ENCODE measurements at regions of chr3 and their contacts with region 1.

Region 1: DNA sequence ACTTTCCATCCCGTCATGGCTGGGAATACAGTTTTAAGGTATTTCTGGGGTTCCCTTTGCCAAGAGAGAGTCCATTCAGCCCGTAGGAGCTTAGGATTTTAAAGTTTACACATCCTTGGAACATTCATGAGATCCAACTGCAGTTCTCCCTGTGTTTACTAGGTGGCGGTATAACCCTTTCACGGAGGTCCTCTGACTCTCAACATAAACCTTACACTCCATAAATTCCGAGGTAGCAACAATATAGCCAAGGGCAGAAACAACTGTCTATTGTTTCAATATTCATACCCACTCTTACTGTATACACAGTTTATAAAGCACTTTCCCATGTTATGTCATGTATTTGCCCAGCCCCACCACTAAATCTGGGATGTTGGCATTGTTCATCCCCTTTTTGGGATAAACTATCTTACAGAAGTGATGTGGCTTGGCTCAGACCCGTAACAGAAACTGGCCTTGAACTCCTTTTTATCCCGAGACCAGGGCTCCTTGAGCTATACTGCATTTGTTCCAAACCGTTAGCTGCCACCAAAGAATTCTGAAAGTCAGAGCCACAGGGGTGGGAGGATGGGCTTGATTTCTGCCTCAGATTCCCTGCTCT is 69.2 kb upstream of the COL6A5 start:
- DNase-seq: peak; percentile 44
- H3K4me3 ChIP-seq: no peak overlapping the region
- H3K27ac ChIP-seq: no peak overlapping the region
- H3K4me1 ChIP-seq: no peaks in the 10 kb centered on the region
- H3K27me3 ChIP-seq: peaks cover 3% of the 10 kb centered on the region
- CTCF ChIP-seq: peak; percentile 94 to 97

Region 2: DNA sequence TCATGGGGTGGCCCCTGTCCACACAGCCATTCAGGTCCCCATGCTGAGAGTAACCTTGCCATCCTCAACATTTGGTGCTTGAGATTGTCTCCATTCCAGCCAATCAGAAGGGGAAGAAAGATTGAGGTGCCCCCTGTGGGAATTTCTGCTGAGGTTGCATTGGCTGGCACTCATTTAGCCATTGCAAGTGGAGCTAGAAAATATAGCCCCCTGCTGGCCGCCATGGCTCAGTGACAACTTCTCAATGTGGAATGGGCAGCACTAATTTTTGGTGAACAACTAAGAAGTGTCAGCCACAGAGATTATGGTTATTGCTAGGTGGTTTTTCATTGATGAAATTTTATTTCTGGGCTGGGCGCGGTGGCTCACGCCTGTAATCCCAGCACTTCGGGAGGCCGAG is 262.7 kb after region 1 on chr3:
- CTCF ChIA-PET with region 1: interaction called, 4 read pairs
- dilution Hi-C with region 1: no loop called
- in situ Hi-C with region 1: loop called (anchors 5 kb)
- intact Hi-C with region 1: loop called (anchors 1 kb)
- DNase-seq: peak; percentile 19
- H3K4me3 ChIP-seq: no peak overlapping the region
- H3K27ac ChIP-seq: no peak overlapping the region
- H3K4me1 ChIP-seq: no peaks in the 10 kb centered on the region
- H3K27me3 ChIP-seq: no peaks in the 10 kb centered on the region
- CTCF ChIP-seq: peak; percentile 78

Region 3: DNA sequence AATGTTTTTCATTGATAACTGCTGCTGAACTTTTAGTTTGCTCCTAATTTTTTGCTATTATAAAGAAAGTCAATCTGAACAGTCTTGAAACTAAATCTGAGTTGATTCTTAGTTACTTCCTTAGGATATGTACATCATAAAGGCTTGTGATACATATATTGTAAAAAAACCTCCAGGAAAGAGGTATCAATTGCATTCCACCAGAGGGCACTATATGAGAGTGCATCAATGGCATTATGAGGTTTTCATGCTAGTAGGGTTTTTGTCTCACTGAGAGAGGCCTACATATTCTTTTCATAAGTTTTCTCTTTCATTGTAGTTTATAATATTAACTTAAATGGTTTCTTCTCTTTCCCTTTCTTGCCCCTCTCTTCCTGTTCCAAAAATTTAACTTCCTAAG is 423.5 kb after region 1 on chr3:
- CTCF ChIA-PET with region 1: no interaction called
- dilution Hi-C with region 1: no loop called
- in situ Hi-C with region 1: no loop called
- intact Hi-C with region 1: loop called (anchors 10 kb)
- DNase-seq: peak; percentile 31
- H3K4me3 ChIP-seq: no peak overlapping the region
- H3K27ac ChIP-seq: no peak overlapping the region
- H3K4me1 ChIP-seq: no peaks in the 10 kb centered on the region
- H3K27me3 ChIP-seq: no peaks in the 10 kb centered on the region
- CTCF ChIP-seq: peak; percentile 64 to 67

Region 4: DNA sequence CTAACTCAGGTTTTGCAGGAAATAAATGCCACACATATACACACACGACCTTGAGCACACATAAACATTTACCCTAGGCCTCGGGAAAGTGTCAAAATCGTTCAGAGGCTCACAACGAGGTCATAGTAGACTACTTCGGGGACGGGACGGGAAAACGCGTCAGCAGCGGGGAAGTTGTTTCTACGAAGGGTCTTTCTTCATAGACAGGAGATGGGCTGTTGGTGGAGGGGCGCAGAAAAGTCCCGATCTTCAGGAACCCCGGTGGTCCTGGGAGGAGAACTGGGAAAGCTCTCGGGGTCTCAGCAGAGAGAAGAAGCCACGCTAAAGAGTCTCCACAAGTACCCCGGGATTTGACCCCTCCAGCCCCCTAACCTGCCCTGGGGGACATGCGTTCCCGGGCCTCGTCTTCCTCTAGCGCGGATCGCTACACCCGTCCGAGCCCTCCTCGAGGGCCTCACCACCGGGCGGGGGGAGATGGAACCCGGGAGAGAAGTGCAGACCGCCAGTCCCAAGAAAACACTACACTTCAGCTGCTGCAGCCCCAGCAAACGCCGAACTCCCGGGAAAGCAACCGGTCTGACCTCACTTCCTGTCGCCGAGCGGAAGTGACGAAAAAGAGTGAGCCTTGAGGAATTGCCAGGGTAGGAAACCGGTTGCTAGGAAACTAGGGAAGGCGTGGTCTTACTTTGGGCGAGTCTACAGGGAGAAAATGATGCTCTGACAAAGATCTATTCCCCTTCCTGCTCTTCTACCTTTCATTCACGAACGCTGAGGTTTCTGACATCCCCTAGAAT is 470.1 kb after region 1 on chr3 and contains the start of gene PIK3R4:
- CTCF ChIA-PET with region 1: interaction called, 12 read pairs
- dilution Hi-C with region 1: no loop called
- in situ Hi-C with region 1: no loop called
- intact Hi-C with region 1: no loop called
- DNase-seq: peak; percentile 99
- H3K4me3 ChIP-seq: peak within 1 kb of the TSS; percentile 86 to 97 (median 86)
- H3K27ac ChIP-seq: peak within 1 kb of the TSS; percentile 92
- H3K4me1 ChIP-seq: peaks cover 18% of the 10 kb centered on the region
- H3K27me3 ChIP-seq: no peaks in the 10 kb centered on the region
- CTCF ChIP-seq: no peak
- total RNA-seq, gene PIK3R4: 19.1 to 31.5 TPM

Measured in mammary epithelial cell (primary cell).